K562 (cell line): ENCODE measurements at regions of chr1 and their contacts with region 1.

Region 1: DNA sequence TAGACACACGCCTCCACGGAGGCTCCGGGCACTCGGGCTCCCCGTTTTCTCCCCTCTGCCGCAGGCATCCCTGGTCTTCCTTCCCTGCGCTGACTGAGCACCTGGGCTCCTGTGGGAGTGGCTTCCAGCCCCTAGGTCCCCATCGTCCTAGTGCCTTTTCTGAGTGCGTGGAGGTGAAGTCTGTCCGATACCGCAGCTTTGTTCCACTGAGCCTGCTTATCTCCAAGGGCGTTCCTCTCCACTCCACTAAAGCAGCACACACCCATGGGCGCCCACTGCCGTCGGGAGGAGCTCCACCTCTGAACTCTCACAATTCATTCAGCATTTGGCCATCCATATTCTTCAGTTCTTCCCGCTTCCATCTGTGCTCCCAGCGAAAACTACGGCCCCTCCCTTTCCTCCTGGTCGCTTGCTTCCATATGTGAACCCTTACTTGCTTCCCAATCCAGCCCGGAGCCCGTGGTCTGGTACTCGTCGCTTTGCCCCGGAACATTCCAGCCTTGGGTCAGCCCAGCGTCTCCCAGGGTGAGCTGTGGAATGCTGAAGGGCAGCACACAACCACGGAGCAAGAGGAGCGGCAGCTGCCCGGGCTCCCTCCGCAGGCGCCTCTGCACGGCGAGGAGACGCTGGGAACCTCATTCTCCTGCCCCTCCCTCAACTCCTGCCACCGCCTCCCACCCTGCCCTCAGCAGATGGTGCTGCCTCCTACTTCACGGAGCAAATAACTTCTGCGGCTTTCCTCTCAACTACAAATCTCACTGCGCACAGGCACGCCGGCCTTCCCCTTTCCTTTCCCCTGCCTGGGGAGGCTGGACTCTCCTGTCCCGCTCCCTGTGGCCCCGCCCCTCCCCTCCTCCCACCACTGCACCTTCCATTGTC is 27.5 kb downstream of the ATP8B2 start:
- DNase-seq: peak; percentile 62 to 87 (median 66)
- ATAC-seq: peak; percentile 82
- H3K4me3 ChIP-seq: peak overlapping the region; percentile 29
- H3K27ac ChIP-seq: peak overlapping the region; percentile 20; the same call in 2 of the 3 replicates
- H3K4me1 ChIP-seq: peaks cover 31 to 46% of the 10 kb centered on the region in 2 experiments
- H3K27me3 ChIP-seq: no peaks in the 10 kb centered on the region
- CTCF ChIP-seq: peak; percentile 35 to 46 (median 44)
- EP300 ChIP-seq: peak; percentile 50
- POLR2A ChIP-seq: no peak
- RAD21 ChIP-seq: peak in 1 of 2 experiments; percentile 4; a peak in 1 of 4 replicates

Region 2: GRCh38 chr1:154384650-154385489 is 32.0 kb after region 1 on chr1:
- CTCF ChIA-PET with region 1: no interaction called
- POLR2A ChIA-PET with region 1: interaction called, 4 read pairs
- in situ Hi-C with region 1: no loop called
- intact Hi-C with region 1: loop called (anchors 2 kb)
- DNase-seq: peak; percentile 32 to 84 (median 50)
- ATAC-seq: peak; percentile 23
- H3K4me3 ChIP-seq: no peak overlapping the region
- H3K27ac ChIP-seq: peak overlapping the region; percentile 73
- H3K4me1 ChIP-seq: peaks cover 17 to 28% of the 10 kb centered on the region in 2 experiments
- H3K27me3 ChIP-seq: no peaks in the 10 kb centered on the region; a peak in 1 of 5 replicates
- CTCF ChIP-seq: no peak
- EP300 ChIP-seq: peak; percentile 58; the same call in 1 of the 2 replicates
- POLR2A ChIP-seq: no peak
- RAD21 ChIP-seq: no peak

Region 3: DNA sequence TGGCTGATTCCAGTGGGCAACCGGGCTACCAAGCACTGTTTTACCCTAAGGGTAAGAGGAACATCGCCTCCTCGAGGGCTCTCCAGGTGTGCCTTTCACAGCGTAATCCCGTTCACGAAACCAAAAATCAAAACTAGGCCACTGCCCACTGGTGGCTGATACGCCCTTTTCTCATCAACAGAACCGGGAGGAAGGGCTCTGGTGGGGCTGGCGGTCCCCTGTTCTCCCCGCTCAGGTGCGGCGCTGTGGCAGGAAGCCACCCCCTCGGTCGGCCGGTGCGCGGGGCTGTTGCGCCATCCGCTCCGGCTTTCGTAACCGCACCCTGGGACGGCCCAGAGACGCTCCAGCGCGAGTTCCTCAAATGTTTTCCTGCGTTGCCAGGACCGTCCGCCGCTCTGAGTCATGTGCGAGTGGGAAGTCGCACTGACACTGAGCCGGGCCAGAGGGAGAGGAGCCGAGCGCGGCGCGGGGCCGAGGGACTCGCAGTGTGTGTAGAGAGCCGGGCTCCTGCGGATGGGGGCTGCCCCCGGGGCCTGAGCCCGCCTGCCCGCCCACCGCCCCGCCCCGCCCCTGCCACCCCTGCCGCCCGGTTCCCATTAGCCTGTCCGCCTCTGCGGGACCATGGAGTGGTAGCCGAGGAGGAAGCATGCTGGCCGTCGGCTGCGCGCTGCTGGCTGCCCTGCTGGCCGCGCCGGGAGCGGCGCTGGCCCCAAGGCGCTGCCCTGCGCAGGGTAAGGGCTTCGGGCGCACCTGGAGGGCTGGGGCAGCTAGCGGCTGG is 52.4 kb after region 1 on chr1 and contains the start of gene IL6R:
- CTCF ChIA-PET with region 1: interaction called, 3 read pairs
- POLR2A ChIA-PET with region 1: no interaction called
- in situ Hi-C with region 1: no loop called
- intact Hi-C with region 1: loop called (anchors 5 kb)
- DNase-seq: peak; percentile 55 to 80 (median 71)
- ATAC-seq: peak; percentile 87
- H3K4me3 ChIP-seq: peak within 1 kb of the TSS; percentile 32
- H3K27ac ChIP-seq: no peak within 1 kb of the TSS; the same call in 2 of the 3 replicates
- H3K4me1 ChIP-seq: peaks cover 11 to 19% of the 10 kb centered on the region in 2 experiments; a peak in 4 of 5 replicates
- H3K27me3 ChIP-seq: peaks cover 37 to 53% of the 10 kb centered on the region in 2 experiments
- CTCF ChIP-seq: peak; percentile 42 to 79 (median 52); a peak in 5 of 6 replicates
- EP300 ChIP-seq: peak; percentile 14; the same call in 1 of the 2 replicates
- POLR2A ChIP-seq: no peak
- RAD21 ChIP-seq: peak; percentile 43 to 70
- polyA plus RNA-seq, gene IL6R: not detected

Region 4: DNA sequence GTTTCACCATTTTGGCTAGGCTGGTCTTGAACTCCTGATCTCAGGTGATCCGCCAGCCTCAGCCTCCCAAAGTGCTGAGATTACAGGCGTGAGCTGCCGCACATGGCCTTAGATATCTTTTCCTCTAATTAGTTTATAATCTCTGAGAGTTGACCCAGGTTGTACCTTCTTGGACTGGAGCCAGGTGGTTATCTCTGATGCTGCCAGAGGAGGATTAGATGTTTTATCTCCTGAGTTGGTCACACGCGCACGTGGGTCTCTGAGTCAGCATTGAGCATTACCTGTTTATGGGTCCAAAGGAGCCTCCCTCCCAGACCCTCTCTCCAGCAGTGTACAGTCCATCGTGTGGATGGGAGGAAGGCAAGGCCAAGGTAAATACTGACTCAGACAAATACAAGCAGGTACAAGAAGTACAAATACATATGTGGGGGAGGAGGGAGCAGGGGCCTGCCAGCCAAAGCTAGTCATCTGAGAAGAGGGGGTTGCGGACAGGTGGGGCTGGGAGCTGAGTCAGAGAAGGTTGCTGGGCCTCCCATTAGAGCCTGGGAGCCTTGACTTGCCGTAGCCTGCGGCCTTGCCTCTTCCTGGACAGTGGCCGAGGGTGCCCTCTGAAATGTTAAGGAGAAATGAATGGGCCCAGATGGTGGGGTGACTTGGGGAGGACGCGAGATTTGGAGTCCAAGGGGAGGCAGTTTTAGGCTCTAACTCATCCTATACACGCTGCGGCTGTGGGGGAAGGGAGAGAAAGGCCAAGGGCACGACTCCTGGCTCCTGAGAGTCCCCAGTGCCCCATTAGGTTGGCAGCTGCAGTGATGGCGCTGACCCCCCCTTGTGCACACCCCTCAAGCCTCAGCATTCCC is 65.5 kb after region 1 on chr1:
- CTCF ChIA-PET with region 1: no interaction called
- POLR2A ChIA-PET with region 1: no interaction called
- in situ Hi-C with region 1: no loop called
- intact Hi-C with region 1: no loop called
- DNase-seq: peak in 1 of 4 experiments; percentile 28
- ATAC-seq: no peak
- H3K4me3 ChIP-seq: no peak overlapping the region
- H3K27ac ChIP-seq: no peak overlapping the region
- H3K4me1 ChIP-seq: peaks cover 0 to 8% of the 10 kb centered on the region in 2 experiments; a peak in 2 of 5 replicates
- H3K27me3 ChIP-seq: peaks cover 16 to 53% of the 10 kb centered on the region in 2 experiments; a peak in 4 of 5 replicates
- CTCF ChIP-seq: no peak
- EP300 ChIP-seq: no peak
- POLR2A ChIP-seq: no peak
- RAD21 ChIP-seq: no peak